ENCODE measurements at regions of chr14 and their contacts with region 1.

Region 1: GRCh38 chr14:61837336-61838229 is 75.4 kb downstream of the SNAPC1 start:
- DNase-seq: peak; percentile 48
- ATAC-seq: peak; percentile 92
- H3K4me3 Mint-ChIP-seq: no peak overlapping the region
- H3K27ac Mint-ChIP-seq: no peak overlapping the region
- H3K4me1 Mint-ChIP-seq: peaks cover 3% of the 10 kb centered on the region
- H3K27me3 Mint-ChIP-seq: peaks cover 3% of the 10 kb centered on the region
- CTCF ChIP-seq: peak; percentile 88

Region 2: DNA sequence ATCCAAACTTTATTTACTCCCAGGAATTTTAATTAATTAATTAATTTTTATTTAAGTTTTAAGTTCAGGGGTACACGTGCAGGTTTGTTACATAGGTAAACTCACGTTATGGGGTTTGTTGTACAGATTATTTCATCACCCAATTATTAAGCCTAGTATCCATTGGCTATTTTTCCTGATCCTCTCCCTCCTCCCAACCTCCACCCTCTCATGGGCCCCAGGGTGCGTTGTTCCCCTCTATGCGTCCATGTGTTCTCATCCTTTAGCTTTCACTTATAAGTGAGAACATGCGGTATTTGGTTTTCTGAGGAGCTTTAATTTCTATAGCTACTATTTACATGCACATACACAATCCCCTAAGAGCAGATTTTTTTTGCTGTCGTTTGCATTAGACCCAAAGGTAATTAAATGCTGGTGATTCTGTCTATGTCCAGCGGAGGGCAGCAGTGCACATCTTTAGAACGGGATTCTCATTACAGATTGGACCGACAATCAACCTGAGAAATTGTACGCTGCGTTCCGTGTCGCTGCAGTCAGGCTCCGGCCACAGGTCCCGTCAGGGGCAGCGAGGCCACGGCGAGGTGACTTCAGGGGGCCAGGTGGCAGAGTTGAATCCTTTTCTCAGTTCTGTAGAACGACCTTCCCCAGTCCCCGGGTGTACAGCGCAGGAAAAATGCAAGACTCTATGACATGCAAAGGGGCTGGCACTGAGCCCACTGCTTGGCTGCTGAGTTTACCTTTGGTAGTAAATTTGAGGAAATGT is 568.1 kb before region 1 on chr14:
- CTCF ChIA-PET with region 1: interaction called, 3 read pairs
- POLR2A ChIA-PET with region 1: no interaction called
- intact Hi-C with region 1: loop called (anchors 1 kb)
- DNase-seq: peak; percentile 37
- ATAC-seq: peak; percentile 79
- H3K4me3 Mint-ChIP-seq: peak overlapping the region; percentile 50
- H3K27ac Mint-ChIP-seq: no peak overlapping the region
- H3K4me1 Mint-ChIP-seq: peaks cover 2% of the 10 kb centered on the region
- H3K27me3 Mint-ChIP-seq: peaks cover 51% of the 10 kb centered on the region
- CTCF ChIP-seq: peak; percentile 93

Region 3: DNA sequence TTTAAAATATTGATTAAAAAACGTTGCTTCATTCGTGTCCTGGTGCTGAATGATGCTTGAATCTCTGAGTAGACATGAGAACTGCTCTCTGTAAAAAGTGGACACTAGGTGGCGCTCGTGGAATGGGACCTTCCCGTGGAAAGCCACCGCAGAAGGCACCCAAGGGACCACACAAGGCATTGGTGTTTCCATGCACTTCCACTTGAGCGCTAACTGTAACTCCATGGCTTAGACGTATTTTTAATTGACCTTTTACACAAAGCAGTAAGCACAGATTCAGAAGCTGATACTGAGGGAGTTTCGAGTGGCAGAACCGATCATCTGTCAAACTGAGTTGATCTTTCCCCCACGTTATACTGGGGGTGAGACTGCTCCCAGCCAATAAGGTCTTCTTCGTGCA is 380.9 kb before region 1 on chr14:
- CTCF ChIA-PET with region 1: interaction called, 123 read pairs
- POLR2A ChIA-PET with region 1: no interaction called
- intact Hi-C with region 1: loop called (anchors 1 kb)
- DNase-seq: peak; percentile 55
- ATAC-seq: peak; percentile 89
- H3K4me3 Mint-ChIP-seq: no peak overlapping the region
- H3K27ac Mint-ChIP-seq: no peak overlapping the region
- H3K4me1 Mint-ChIP-seq: peaks cover 9% of the 10 kb centered on the region
- H3K27me3 Mint-ChIP-seq: no peaks in the 10 kb centered on the region
- CTCF ChIP-seq: no peak

Region 4: DNA sequence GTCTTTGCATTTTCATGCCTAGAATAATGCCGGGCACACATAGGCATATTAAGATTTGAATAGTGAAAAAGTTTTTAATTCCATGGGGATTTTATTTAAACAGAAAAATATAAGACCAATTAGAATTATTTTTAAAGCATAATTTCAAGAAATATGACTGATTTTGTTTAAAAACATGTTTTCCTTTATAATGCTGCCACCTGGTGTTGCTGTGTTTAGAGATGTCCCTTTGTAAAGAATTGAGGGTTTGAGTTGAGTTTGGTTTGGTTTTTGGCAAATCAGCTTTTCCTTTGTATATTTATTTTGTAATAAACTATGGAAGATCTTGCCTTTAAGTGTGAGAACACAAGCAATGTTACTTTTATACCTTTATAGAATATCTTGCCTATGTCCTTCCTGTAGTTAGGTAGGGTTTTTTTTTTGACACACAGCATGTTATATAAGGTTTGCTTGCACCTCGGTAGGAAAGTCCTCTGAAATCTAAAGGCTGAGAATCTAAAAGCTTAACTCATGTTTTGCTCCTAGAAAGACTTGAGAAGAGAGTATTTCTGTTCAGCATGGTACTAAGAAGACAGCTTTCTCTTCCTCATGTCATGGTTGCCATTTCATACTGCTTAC is 106.7 kb before region 1 on chr14:
- CTCF ChIA-PET with region 1: interaction called, 5 read pairs
- POLR2A ChIA-PET with region 1: no interaction called
- intact Hi-C with region 1: loop called (anchors 1 kb)
- DNase-seq: no peak
- ATAC-seq: no peak
- H3K4me3 Mint-ChIP-seq: no peak overlapping the region
- H3K27ac Mint-ChIP-seq: peak overlapping the region; percentile 57
- H3K4me1 Mint-ChIP-seq: peaks cover 41% of the 10 kb centered on the region
- H3K27me3 Mint-ChIP-seq: no peaks in the 10 kb centered on the region
- CTCF ChIP-seq: no peak

Region 5: GRCh38 chr14:61761959-61762786 is 75.4 kb before region 1 on chr14 and contains the start of gene SNAPC1:
- CTCF ChIA-PET with region 1: interaction called, 10 read pairs
- POLR2A ChIA-PET with region 1: interaction called, 3 read pairs
- intact Hi-C with region 1: no loop called
- DNase-seq: peak; percentile 90
- ATAC-seq: peak; percentile 98
- H3K4me3 Mint-ChIP-seq: peak within 1 kb of the TSS; percentile 95
- H3K27ac Mint-ChIP-seq: peak within 1 kb of the TSS; percentile 95
- H3K4me1 Mint-ChIP-seq: peaks cover 31% of the 10 kb centered on the region
- H3K27me3 Mint-ChIP-seq: no peaks in the 10 kb centered on the region
- CTCF ChIP-seq: no peak
- total RNA-seq, gene SNAPC1: 5.2 TPM in 2 replicates

Region 6: DNA sequence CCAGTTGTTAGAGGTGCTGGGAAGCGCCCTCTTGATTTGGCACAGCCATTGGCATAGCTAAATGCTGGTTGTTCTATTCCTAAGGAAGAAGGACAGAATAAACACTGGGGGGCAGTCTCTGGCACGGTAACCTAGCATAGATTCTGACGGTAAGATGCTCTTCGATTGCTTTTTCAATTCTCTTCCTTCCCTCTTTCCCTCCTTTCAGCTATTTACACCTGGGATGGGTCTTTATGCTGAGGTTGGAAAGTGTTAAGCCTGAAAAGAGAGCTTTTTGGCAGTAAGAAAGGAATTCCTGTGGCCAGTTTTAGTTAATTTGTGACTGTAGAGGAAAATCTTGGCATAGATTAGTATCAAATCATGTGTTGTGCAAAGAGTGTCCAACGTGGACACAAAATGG is 87.5 kb after region 1 on chr14:
- CTCF ChIA-PET with region 1: interaction called, 10 read pairs
- POLR2A ChIA-PET with region 1: no interaction called
- intact Hi-C with region 1: no loop called
- DNase-seq: no peak
- ATAC-seq: peak; percentile 70
- H3K4me3 Mint-ChIP-seq: peak overlapping the region; percentile 21
- H3K27ac Mint-ChIP-seq: no peak overlapping the region
- H3K4me1 Mint-ChIP-seq: peaks cover 20% of the 10 kb centered on the region
- H3K27me3 Mint-ChIP-seq: no peaks in the 10 kb centered on the region
- CTCF ChIP-seq: peak; percentile 45

Region 7: GRCh38 chr14:61953602-61954001 is 116.0 kb after region 1 on chr14:
- CTCF ChIA-PET with region 1: no interaction called
- POLR2A ChIA-PET with region 1: no interaction called
- intact Hi-C with region 1: no loop called
- DNase-seq: no peak
- ATAC-seq: no peak
- H3K4me3 Mint-ChIP-seq: no peak overlapping the region
- H3K27ac Mint-ChIP-seq: no peak overlapping the region
- H3K4me1 Mint-ChIP-seq: peaks cover 4% of the 10 kb centered on the region
- H3K27me3 Mint-ChIP-seq: peaks cover 3% of the 10 kb centered on the region
- CTCF ChIP-seq: no peak

Region 8: GRCh38 chr14:62916551-62916950 is 1079.0 kb after region 1 on chr14:
- CTCF ChIA-PET with region 1: no interaction called
- POLR2A ChIA-PET with region 1: no interaction called
- intact Hi-C with region 1: no loop called
- DNase-seq: no peak
- ATAC-seq: no peak
- H3K4me3 Mint-ChIP-seq: no peak overlapping the region
- H3K27ac Mint-ChIP-seq: no peak overlapping the region
- H3K4me1 Mint-ChIP-seq: no peaks in the 10 kb centered on the region
- H3K27me3 Mint-ChIP-seq: no peaks in the 10 kb centered on the region
- CTCF ChIP-seq: no peak

Measured in activated B cell treated with CpG ODN at 0.5 μM for 24 hours (primary cell).